Stomach (tissue), 19 donors: ENCODE measurements at regions of chr16 and their contacts with region 1.

Region 1: GRCh38 chr16:88785106-88785924 is at the start of gene PIEZO1:
- DNase-seq: peak; percentile 82 to 91
- H3K4me3 ChIP-seq: peak within 1 kb of the TSS; percentile 70 to 89 (median 80)
- H3K27ac ChIP-seq: peak within 1 kb of the TSS; percentile 83 to 98 (median 90)
- H3K4me1 ChIP-seq: peaks cover 40 to 57% (median 47%) of the 10 kb centered on the region in 4 donors
- H3K27me3 ChIP-seq: peaks cover 0 to 4% (median 0%) of the 10 kb centered on the region in 3 donors
- CTCF ChIP-seq: peak in 6 of 7 experiments; percentile 18 to 92 (median 86)
- EP300 ChIP-seq: no peak
- POLR2A ChIP-seq: no peak
- total RNA-seq, gene PIEZO1: 81.7 to 171 (median 128) TPM

Region 2: DNA sequence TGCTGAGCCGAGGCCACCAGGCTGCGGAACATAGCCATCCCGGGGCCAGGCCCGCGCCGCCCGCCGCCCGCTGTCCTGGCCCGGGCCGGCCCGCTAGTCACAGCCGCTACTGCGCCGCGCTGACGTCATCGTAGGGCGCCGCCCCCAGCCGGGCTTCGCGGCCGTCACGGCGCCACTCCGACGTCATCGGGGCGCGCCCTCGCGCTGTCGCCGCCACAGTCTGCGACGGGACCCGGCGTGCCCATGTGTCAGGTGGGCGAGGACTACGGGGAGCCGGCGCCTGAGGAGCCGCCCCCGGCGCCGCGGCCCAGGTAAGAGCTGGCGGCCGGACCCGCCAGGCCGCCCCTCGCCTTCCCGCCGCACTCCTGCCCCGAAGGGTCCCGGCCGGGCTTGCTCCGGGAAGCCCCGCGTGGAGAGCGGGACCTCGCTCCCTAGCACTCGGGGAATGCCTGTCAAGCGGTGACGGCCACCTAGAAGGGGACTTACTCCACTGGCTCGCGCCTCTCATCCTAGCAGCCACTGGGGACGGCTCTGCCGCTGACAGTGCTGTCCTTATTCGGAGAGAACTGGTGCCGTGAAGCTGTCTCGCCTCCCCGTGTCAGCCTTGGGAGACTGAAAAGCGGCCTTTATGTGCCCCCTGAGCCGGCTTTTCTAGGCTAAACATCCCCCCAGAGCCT is 78.9 kb before region 1 on chr16 and contains the starts of genes CTU2 and RNF166:
- intact Hi-C with region 1: no loop called
- DNase-seq: peak; percentile 94 to 97
- H3K4me3 ChIP-seq: peak within 1 kb of the TSS; percentile 79 to 100 (median 98)
- H3K27ac ChIP-seq: peak within 1 kb of the TSS; percentile 79 to 94 (median 86)
- H3K4me1 ChIP-seq: peaks cover 28 to 66% (median 60%) of the 10 kb centered on the region in 4 donors
- H3K27me3 ChIP-seq: no peaks in the 10 kb centered on the region
- CTCF ChIP-seq: no peak
- EP300 ChIP-seq: no peak
- POLR2A ChIP-seq: no peak
- total RNA-seq, gene CTU2: 1.8 to 53.3 (median 11.2) TPM
- total RNA-seq, gene RNF166: 8.8 to 31.9 (median 14.6) TPM

Region 3: GRCh38 chr16:88743693-88744576 is 41.4 kb before region 1 on chr16:
- intact Hi-C with region 1: loop called (anchors 5 kb)
- DNase-seq: peak; percentile 87 to 89
- H3K4me3 ChIP-seq: no peak overlapping the region
- H3K27ac ChIP-seq: peak overlapping the region in 2 of 5 donors; percentile 15 to 79
- H3K4me1 ChIP-seq: peaks cover 20 to 57% (median 38%) of the 10 kb centered on the region in 4 donors
- H3K27me3 ChIP-seq: no peaks in the 10 kb centered on the region
- CTCF ChIP-seq: peak in 6 of 7 experiments; percentile 75 to 95 (median 84)
- EP300 ChIP-seq: no peak
- POLR2A ChIP-seq: no peak